ENCODE measurements at regions of chr4 and their contacts with region 1.

Region 1: DNA sequence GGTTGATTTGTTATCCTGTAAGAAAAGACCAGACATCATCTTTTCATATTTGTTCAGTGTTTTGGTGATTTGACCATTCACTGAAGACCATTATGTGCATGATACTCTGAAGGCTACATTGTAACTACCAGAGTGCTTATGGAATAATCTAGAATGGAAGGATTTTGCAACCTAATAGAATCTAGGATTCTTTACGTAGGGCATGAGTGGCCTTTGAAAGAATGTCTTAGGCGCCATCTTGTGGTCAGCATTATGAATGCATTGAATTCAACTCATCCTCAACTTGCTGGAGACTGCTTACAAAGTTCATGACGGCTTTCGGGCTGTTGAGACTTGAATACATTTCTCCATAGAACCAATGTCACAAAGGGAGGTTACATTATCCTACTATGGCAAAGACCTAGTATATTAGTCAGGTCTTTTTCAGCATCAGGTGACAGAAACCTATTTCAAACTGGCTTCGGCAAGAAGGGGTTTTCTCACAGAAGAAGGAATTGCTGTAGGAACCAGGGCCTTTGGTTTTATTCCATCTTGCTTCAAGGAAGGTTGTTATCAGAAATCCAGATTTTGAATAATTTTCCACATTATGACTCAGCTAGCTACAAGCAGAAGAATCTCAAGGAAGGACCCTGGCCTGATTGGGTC is 104.1 kb downstream of the GPAT3 start:
- DNase-seq: peak; percentile 51
- ATAC-seq: peak; percentile 89
- H3K4me3 ChIP-seq: no peak overlapping the region
- H3K27ac ChIP-seq: no peak overlapping the region
- H3K4me1 ChIP-seq: no peaks in the 10 kb centered on the region
- H3K27me3 ChIP-seq: no peaks in the 10 kb centered on the region
- CTCF ChIP-seq: peak; percentile 70

Region 2: DNA sequence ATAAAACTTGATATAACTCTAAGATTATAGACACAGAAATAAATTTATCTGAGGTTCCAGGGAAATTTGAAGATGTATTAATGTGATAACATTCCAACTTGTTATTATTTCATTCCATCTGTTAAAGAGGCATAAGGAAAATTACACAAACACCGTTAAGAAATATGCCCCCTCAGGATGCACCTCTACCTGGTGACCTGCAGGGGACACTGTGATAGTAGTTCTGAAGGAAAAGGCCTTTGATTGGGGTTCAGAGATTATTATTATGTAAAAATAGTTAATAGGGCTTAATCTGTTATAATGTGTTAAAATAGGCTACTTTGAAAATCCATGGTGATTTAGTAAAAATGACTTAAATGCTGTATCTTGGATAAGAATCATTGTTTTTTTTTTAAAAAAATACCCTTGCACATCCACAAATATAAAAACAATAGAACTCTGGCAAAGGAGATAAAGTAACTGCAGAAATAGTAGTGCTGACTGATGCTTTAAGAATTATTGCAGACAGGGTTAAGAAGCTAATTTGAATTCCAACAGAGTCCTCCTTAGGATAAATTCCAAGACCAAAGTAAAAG is 149.0 kb before region 1 on chr4:
- CTCF ChIA-PET with region 1: no interaction called
- POLR2A ChIA-PET with region 1: no interaction called
- in situ Hi-C with region 1: no loop called
- intact Hi-C with region 1: loop called (anchors 2 kb)
- DNase-seq: peak; percentile 38
- ATAC-seq: peak; percentile 74; the same call in 1 of the 2 replicates
- H3K4me3 ChIP-seq: no peak overlapping the region
- H3K27ac ChIP-seq: no peak overlapping the region
- H3K4me1 ChIP-seq: no peaks in the 10 kb centered on the region
- H3K27me3 ChIP-seq: no peaks in the 10 kb centered on the region
- CTCF ChIP-seq: peak; percentile 85; the same call in 1 of the 2 replicates

Region 3: GRCh38 chr4:83503974-83504373 is 136.0 kb before region 1 on chr4:
- CTCF ChIA-PET with region 1: no interaction called
- POLR2A ChIA-PET with region 1: no interaction called
- in situ Hi-C with region 1: no loop called
- intact Hi-C with region 1: loop called (anchors 1 kb)
- DNase-seq: no peak
- ATAC-seq: no peak
- H3K4me3 ChIP-seq: no peak overlapping the region
- H3K27ac ChIP-seq: no peak overlapping the region
- H3K4me1 ChIP-seq: no peaks in the 10 kb centered on the region
- H3K27me3 ChIP-seq: no peaks in the 10 kb centered on the region
- CTCF ChIP-seq: no peak

Region 4: DNA sequence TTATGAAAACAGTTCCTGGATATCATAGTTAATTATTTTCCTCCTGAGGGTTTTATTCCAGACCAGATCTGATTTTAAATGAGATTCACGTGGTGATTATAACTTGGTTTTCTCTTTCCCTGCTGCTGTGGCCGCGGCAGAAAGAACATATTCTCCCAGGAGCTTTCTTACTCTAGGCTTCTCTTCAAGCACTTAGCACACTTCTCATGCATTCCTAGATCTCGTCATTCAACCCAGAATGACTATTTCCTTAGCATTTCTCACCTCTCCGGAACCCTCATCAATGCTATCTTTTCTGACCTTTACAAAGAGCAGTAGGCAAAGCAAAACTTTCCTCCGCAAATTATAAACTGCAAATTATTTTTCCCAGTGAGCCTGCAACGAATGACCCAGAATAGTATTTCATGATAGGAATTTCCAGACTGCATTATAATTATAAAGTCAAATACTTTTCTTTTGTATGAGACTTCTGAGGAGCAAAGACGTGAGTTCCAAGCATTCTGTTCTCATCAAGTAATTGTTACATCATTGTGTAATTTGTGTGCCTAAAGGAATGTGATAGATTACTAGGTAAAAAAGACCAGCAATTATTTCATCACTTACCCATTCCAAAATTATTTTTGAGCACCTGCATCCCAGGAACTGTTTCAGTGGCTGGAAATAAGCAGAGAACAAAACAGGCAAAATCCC is 19.0 kb after region 1 on chr4:
- CTCF ChIA-PET with region 1: no interaction called
- POLR2A ChIA-PET with region 1: no interaction called
- in situ Hi-C with region 1: no loop called
- intact Hi-C with region 1: no loop called
- DNase-seq: no peak
- ATAC-seq: no peak
- H3K4me3 ChIP-seq: no peak overlapping the region
- H3K27ac ChIP-seq: no peak overlapping the region
- H3K4me1 ChIP-seq: no peaks in the 10 kb centered on the region
- H3K27me3 ChIP-seq: no peaks in the 10 kb centered on the region
- CTCF ChIP-seq: no peak

Region 5: DNA sequence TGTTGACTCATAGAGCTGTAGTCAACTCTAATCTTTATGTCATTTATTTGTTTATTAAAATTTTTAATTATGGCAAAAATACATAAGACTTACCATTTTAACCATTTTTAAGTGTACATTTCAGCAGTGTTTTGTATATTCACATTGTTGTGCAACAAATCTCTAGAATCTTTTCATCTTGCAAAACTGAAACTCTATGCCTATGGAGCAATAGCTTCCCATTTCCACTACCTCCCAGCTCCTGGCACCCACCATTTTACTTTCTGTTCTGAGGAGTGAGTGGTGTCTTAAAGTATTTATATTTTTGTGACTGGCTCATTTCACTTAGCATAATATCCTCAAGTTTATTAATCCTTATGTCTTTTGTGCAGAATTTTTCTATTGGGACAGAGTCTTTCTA is 76.9 kb after region 1 on chr4:
- CTCF ChIA-PET with region 1: no interaction called
- POLR2A ChIA-PET with region 1: no interaction called
- in situ Hi-C with region 1: no loop called
- intact Hi-C with region 1: no loop called
- DNase-seq: no peak
- ATAC-seq: no peak
- H3K4me3 ChIP-seq: no peak overlapping the region
- H3K27ac ChIP-seq: no peak overlapping the region
- H3K4me1 ChIP-seq: no peaks in the 10 kb centered on the region
- H3K27me3 ChIP-seq: no peaks in the 10 kb centered on the region
- CTCF ChIP-seq: no peak

Region 6: DNA sequence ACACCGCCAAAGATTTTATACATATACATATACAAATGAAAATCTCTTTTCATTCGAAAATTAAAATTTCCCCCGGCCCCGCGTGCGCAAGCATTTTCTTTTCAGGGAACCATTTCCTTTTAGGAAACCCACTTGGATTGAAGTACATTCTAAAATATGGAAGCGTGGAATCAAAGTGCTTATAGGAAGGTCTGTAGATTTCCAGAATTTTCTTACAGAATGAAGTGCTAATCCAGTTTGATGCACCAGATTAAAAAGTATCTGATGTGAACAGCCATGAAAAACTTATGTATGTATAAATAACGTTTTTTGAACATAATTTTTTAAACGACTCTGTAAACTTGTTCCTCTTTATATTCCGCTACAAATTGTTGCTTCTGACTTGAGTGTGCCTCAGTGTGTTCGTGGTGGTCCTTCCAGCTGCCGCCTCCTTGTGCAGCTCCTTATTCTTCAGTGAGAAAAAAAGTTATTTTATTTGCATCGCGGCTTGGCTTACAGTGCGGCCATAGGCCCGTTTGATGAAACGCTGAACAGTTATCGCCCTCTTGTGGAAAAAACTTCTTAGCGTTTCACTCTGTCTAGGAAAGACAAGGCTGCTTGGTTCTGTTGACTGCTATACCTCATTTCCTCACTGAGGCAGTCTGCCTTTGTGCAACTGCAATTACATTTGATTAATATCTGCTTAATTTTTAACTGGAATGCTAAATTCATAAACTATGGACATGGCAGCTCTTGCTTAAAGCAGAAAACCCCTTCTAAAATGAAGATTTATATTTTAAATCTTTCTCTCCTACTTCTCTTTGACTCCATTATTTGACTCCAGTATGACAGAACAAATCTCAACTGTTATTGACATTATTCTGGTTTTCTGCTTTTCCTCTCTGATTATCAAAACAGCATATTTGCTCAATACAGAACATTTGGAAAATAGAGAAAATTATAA is 863.8 kb after region 1 on chr4:
- CTCF ChIA-PET with region 1: no interaction called
- POLR2A ChIA-PET with region 1: no interaction called
- in situ Hi-C with region 1: no loop called
- intact Hi-C with region 1: loop called (anchors 10 kb)
- DNase-seq: peak; percentile 30
- ATAC-seq: peak; percentile 72
- H3K4me3 ChIP-seq: no peak overlapping the region
- H3K27ac ChIP-seq: no peak overlapping the region
- H3K4me1 ChIP-seq: no peaks in the 10 kb centered on the region
- H3K27me3 ChIP-seq: peaks cover 3% of the 10 kb centered on the region; the same call in 1 of the 2 replicates
- CTCF ChIP-seq: peak; percentile 79

Measured in Panc1 (cell line).